Naive thymus-derived CD4-positive, alpha-beta T cell (primary cell): ENCODE measurements at regions of chr7 and their contacts with region 1.

Region 1: GRCh38 chr7:135170274-135170997 is at the start of gene CYREN:
- DNase-seq: peak; percentile 74 to 91 (median 82)
- ATAC-seq: peak; percentile 85
- H3K4me3 ChIP-seq: peak within 1 kb of the TSS; percentile 84
- H3K4me3 Mint-ChIP-seq: peak within 1 kb of the TSS; percentile 84 to 96 (median 90)
- H3K27ac ChIP-seq: peak within 1 kb of the TSS; percentile 95
- H3K27ac Mint-ChIP-seq: peak within 1 kb of the TSS; percentile 94 to 98 (median 95)
- H3K4me1 ChIP-seq: peaks cover 16 to 29% of the 10 kb centered on the region in 2 donors
- H3K4me1 Mint-ChIP-seq: peaks cover 31 to 59% (median 47%) of the 10 kb centered on the region in 7 donors
- H3K27me3 ChIP-seq: no peaks in the 10 kb centered on the region
- H3K27me3 Mint-ChIP-seq: no peaks in the 10 kb centered on the region
- total RNA-seq, gene CYREN: 25.6 to 50.7 (median 32.0) TPM

Region 2: GRCh38 chr7:134184767-134185166 is 985.7 kb before region 1 on chr7:
- CTCF ChIA-PET with region 1: no interaction called
- POLR2A ChIA-PET with region 1: no interaction called
- intact Hi-C with region 1: no loop called
- DNase-seq: no peak
- ATAC-seq: peak; percentile 41
- H3K4me3 ChIP-seq: no peak overlapping the region
- H3K4me3 Mint-ChIP-seq: no peak overlapping the region
- H3K27ac ChIP-seq: no peak overlapping the region
- H3K27ac Mint-ChIP-seq: no peak overlapping the region
- H3K4me1 ChIP-seq: no peaks in the 10 kb centered on the region
- H3K4me1 Mint-ChIP-seq: no peaks in the 10 kb centered on the region
- H3K27me3 ChIP-seq: no peaks in the 10 kb centered on the region
- H3K27me3 Mint-ChIP-seq: peaks cover 0 to 16% (median 0%) of the 10 kb centered on the region in 5 donors

Region 3: DNA sequence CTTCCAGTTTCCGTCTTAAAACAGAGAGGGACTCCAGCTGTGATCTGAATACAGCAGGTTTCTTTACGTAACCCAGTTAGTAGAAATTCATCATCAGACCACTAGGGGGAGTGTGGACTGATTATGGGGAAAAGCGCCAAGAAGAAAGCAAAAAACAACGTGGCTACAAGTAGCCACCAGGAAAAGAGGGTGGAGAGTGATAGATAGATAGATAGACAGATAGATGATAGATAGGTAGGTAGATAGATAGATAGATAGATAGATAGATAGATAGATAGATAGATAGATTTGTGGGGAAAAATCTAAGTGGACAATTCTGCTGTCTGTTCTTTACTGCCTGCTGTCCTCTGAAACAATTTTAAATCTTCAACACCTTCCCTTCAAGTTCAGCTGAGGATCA is 655.8 kb before region 1 on chr7:
- CTCF ChIA-PET with region 1: no interaction called
- POLR2A ChIA-PET with region 1: no interaction called
- intact Hi-C with region 1: loop called in 1 of 2 experiments (anchors 2 kb)
- DNase-seq: peak in 7 of 9 donors; percentile 32 to 67 (median 57)
- ATAC-seq: peak; percentile 81
- H3K4me3 ChIP-seq: no peak overlapping the region
- H3K4me3 Mint-ChIP-seq: peak overlapping the region in 1 of 10 donors; percentile 49
- H3K27ac ChIP-seq: no peak overlapping the region
- H3K27ac Mint-ChIP-seq: no peak overlapping the region
- H3K4me1 ChIP-seq: no peaks in the 10 kb centered on the region
- H3K4me1 Mint-ChIP-seq: peaks cover 4 to 6% (median 5%) of the 10 kb centered on the region in 7 donors
- H3K27me3 ChIP-seq: no peaks in the 10 kb centered on the region
- H3K27me3 Mint-ChIP-seq: peaks cover 6 to 21% (median 14%) of the 10 kb centered on the region in 5 donors

Region 4: GRCh38 chr7:134710859-134711624 is 459.4 kb before region 1 on chr7:
- CTCF ChIA-PET with region 1: no interaction called
- POLR2A ChIA-PET with region 1: no interaction called
- intact Hi-C with region 1: loop called in 1 of 2 experiments (anchors 5 kb)
- DNase-seq: peak; percentile 15 to 92 (median 88)
- ATAC-seq: peak; percentile 96
- H3K4me3 ChIP-seq: peak overlapping the region; percentile 15
- H3K4me3 Mint-ChIP-seq: peak overlapping the region; percentile 32 to 77 (median 66)
- H3K27ac ChIP-seq: peak overlapping the region; percentile 77
- H3K27ac Mint-ChIP-seq: peak overlapping the region; percentile 86 to 99 (median 94)
- H3K4me1 ChIP-seq: peaks cover 10 to 15% of the 10 kb centered on the region in 2 donors
- H3K4me1 Mint-ChIP-seq: peaks cover 11 to 32% (median 22%) of the 10 kb centered on the region in 7 donors
- H3K27me3 ChIP-seq: no peaks in the 10 kb centered on the region
- H3K27me3 Mint-ChIP-seq: no peaks in the 10 kb centered on the region

Region 5: DNA sequence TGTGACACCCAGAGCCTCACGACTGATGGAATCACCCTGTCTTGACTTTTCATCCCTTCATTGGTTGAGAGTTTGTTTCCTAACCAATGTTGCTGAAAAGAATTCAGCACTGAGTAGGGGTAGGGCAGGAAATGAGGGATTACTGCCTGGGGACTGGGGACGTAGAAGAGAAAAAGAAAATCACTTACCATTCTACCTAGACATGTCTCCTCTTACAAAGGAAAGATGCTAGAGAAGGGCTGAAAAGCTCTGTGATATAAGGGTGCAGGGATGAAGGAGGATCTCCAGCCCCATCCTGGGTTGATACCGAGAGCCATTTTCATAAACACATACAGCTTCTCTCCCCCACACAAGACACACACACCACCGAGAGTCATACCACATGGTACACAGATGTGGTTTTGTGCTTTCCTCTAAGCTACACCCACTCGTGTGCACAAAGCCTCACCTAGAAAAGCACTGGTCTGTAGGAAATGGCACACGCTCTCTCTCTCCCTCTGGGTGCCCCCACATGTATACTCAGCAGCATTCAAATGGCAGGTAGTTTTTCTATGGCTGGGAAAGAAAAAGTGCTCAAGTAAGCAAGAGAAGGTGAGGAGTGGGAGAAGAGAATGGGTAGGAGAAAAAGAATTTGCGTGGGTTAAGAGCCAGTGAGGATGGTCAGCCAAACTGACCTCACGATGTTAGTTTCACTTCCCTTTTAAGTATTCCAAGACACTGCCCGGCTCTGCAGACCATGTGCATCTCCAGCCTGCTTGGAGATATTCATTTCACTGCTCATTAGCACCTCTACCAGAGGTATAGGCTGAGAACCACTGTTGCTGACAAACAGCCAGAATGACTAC is 305.2 kb before region 1 on chr7:
- CTCF ChIA-PET with region 1: no interaction called
- POLR2A ChIA-PET with region 1: no interaction called
- intact Hi-C with region 1: loop called in 1 of 2 experiments (anchors 5 kb)
- DNase-seq: peak in 8 of 9 donors; percentile 43 to 79 (median 76)
- ATAC-seq: peak; percentile 91
- H3K4me3 ChIP-seq: peak overlapping the region; percentile 51
- H3K4me3 Mint-ChIP-seq: peak overlapping the region; percentile 64 to 90 (median 84)
- H3K27ac ChIP-seq: peak overlapping the region; percentile 68
- H3K27ac Mint-ChIP-seq: peak overlapping the region; percentile 88 to 96 (median 92)
- H3K4me1 ChIP-seq: peaks cover 0 to 13% of the 10 kb centered on the region in 2 donors
- H3K4me1 Mint-ChIP-seq: peaks cover 8 to 76% (median 58%) of the 10 kb centered on the region in 7 donors
- H3K27me3 ChIP-seq: no peaks in the 10 kb centered on the region
- H3K27me3 Mint-ChIP-seq: no peaks in the 10 kb centered on the region

Region 6: GRCh38 chr7:134986363-134987251 is 183.8 kb before region 1 on chr7 and contains the start of gene AGBL3:
- CTCF ChIA-PET with region 1: interaction called, 20 read pairs
- POLR2A ChIA-PET with region 1: interaction called, 49 read pairs
- intact Hi-C with region 1: loop called (anchors 1 kb)
- DNase-seq: peak; percentile 80 to 92 (median 89)
- ATAC-seq: peak; percentile 94
- H3K4me3 ChIP-seq: peak within 1 kb of the TSS; percentile 92
- H3K4me3 Mint-ChIP-seq: peak within 1 kb of the TSS; percentile 93 to 100 (median 98)
- H3K27ac ChIP-seq: peak within 1 kb of the TSS; percentile 96
- H3K27ac Mint-ChIP-seq: peak within 1 kb of the TSS; percentile 97 to 100 (median 99)
- H3K4me1 ChIP-seq: no peaks in the 10 kb centered on the region
- H3K4me1 Mint-ChIP-seq: peaks cover 20 to 61% (median 52%) of the 10 kb centered on the region in 7 donors
- H3K27me3 ChIP-seq: no peaks in the 10 kb centered on the region
- H3K27me3 Mint-ChIP-seq: no peaks in the 10 kb centered on the region
- total RNA-seq, gene AGBL3: 2.1 to 6.6 (median 3.8) TPM

Region 7: GRCh38 chr7:135160098-135160857 is 10.2 kb before region 1 on chr7:
- CTCF ChIA-PET with region 1: interaction called, 5 read pairs
- POLR2A ChIA-PET with region 1: interaction called, 10 read pairs
- intact Hi-C with region 1: loop called (anchors 1 kb)
- DNase-seq: no peak
- ATAC-seq: peak; percentile 28
- H3K4me3 ChIP-seq: no peak overlapping the region
- H3K4me3 Mint-ChIP-seq: peak overlapping the region in 4 of 10 donors; percentile 6 to 47 (median 42)
- H3K27ac ChIP-seq: no peak overlapping the region
- H3K27ac Mint-ChIP-seq: peak overlapping the region; percentile 33 to 88 (median 68)
- H3K4me1 ChIP-seq: peaks cover 11 to 24% of the 10 kb centered on the region in 2 donors
- H3K4me1 Mint-ChIP-seq: peaks cover 35 to 58% (median 48%) of the 10 kb centered on the region in 7 donors
- H3K27me3 ChIP-seq: no peaks in the 10 kb centered on the region
- H3K27me3 Mint-ChIP-seq: no peaks in the 10 kb centered on the region